Activated T-helper 1 cell treated with anti-CD3 and anti-CD28 coated beads, Interleukin-12 subunit alpha, Interleukin-12 subunit beta, Interleukin-2, Interleukin-4 antibody, amounts not matched to agents 30 ng/mL and 10 ng/mL and 1 ng/mL, durations not matched to agents 14 hours and 24 hours and 36 hours (primary cell): ENCODE measurements at regions of chr6 and their contacts with region 1.

Region 1: DNA sequence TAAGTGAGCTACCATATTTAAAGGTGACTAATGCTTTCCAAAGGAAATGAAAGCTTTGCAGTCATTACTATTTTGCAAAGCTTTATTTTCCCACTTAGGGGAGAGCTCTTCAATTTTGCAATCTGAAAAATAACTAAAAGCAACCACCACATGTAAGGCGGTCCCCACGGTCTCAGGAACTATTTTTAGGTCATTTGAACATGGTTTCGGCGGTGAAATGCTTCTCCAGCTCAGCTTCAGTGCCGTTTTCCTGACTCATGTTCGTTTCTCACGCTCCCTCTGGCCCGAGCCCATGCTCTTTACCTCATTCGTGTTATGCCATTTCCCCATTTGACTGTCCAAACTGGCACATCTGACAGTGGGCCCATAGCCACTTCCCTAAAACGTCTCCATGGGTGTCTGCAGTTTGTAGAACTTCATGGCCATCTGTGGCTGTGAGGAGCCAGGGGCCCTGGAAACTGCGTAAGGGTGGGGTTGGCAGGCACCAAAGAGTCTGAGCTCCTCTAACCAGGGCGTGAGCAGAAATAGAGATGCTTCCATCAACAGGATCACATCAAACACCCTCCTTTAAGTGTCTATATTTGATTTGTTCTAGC is 46.5 kb downstream of the ADTRP start:
- DNase-seq: peak; percentile 25
- H3K4me3 Mint-ChIP-seq: peak overlapping the region; percentile 23
- H3K27ac Mint-ChIP-seq: peak overlapping the region; percentile 87
- H3K4me1 Mint-ChIP-seq: peaks cover 71% of the 10 kb centered on the region
- H3K27me3 Mint-ChIP-seq: no peaks in the 10 kb centered on the region

Region 2: GRCh38 chr6:11766589-11767450 is 34.7 kb after region 1 on chr6:
- intact Hi-C with region 1: loop called (anchors 5 kb)
- DNase-seq: no peak
- H3K4me3 Mint-ChIP-seq: no peak overlapping the region
- H3K27ac Mint-ChIP-seq: no peak overlapping the region
- H3K4me1 Mint-ChIP-seq: peaks cover 18% of the 10 kb centered on the region
- H3K27me3 Mint-ChIP-seq: peaks cover 1% of the 10 kb centered on the region

Region 3: DNA sequence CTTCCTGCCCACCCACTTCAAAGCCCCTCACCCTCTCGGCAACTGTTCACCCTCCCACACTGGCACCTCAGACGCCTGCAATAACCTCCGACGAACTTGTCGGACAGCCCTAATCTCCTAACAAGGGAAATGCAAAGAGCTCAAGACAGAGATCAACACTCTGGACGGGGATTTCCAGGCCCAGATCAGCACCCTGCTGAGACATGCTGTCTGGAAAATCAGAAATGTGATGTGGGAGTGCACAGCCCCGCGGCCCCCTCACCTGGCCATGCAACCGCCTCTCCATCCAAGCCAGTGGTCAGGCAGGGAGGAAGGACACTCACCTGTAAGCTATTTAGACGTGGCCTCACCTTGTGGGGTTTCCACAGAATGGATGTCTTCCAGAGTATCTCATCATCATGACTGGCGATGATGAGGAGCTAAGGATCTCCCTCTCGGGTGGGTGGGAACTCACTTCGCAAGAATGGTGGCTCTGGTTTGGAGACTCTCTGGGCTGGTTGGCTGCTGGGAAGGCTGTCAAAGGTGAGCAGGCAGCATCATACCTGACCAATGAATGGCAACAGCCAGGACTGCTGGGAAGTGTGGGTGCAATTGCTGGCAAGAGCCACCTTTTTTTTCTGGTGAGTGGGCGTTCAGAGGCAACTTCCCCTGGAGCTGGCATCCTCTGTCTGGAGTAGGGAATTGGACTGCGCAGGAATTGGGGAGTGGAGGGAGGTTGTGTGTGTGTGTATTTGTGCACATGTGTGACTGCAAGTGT is 74.6 kb after region 1 on chr6:
- intact Hi-C with region 1: loop called (anchors 1 kb)
- DNase-seq: peak; percentile 3
- H3K4me3 Mint-ChIP-seq: peak overlapping the region; percentile 34
- H3K27ac Mint-ChIP-seq: peak overlapping the region; percentile 82
- H3K4me1 Mint-ChIP-seq: peaks cover 53% of the 10 kb centered on the region
- H3K27me3 Mint-ChIP-seq: no peaks in the 10 kb centered on the region

Region 4: GRCh38 chr6:12051861-12052368 is 319.8 kb after region 1 on chr6:
- intact Hi-C with region 1: loop called (anchors 1 kb)
- DNase-seq: peak; percentile 76
- H3K4me3 Mint-ChIP-seq: peak overlapping the region; percentile 78
- H3K27ac Mint-ChIP-seq: peak overlapping the region; percentile 96
- H3K4me1 Mint-ChIP-seq: peaks cover 77% of the 10 kb centered on the region
- H3K27me3 Mint-ChIP-seq: no peaks in the 10 kb centered on the region

Region 5: GRCh38 chr6:12233693-12234571 is 501.8 kb after region 1 on chr6:
- intact Hi-C with region 1: loop called (anchors 5 kb)
- DNase-seq: peak; percentile 18
- H3K4me3 Mint-ChIP-seq: peak overlapping the region; percentile 16
- H3K27ac Mint-ChIP-seq: peak overlapping the region; percentile 31
- H3K4me1 Mint-ChIP-seq: peaks cover 55% of the 10 kb centered on the region
- H3K27me3 Mint-ChIP-seq: no peaks in the 10 kb centered on the region